Aorta (tissue), 5 donors: ENCODE measurements at regions of chr17 and their contacts with region 1.

Region 1: GRCh38 chr17:6313835-6314234 is 121.1 kb downstream of the AIPL1 start:
- DNase-seq: no peak
- ATAC-seq: no peak
- H3K4me3 ChIP-seq: no peak overlapping the region
- H3K27ac ChIP-seq: no peak overlapping the region
- H3K4me1 ChIP-seq: no peaks in the 10 kb centered on the region
- H3K27me3 ChIP-seq: no peaks in the 10 kb centered on the region

Region 2: GRCh38 chr17:6257336-6257735 is 56.5 kb before region 1 on chr17:
- intact Hi-C with region 1: loop called in 1 of 2 experiments (anchors 10 kb)
- DNase-seq: no peak
- ATAC-seq: no peak
- H3K4me3 ChIP-seq: no peak overlapping the region
- H3K27ac ChIP-seq: no peak overlapping the region
- H3K4me1 ChIP-seq: no peaks in the 10 kb centered on the region
- H3K27me3 ChIP-seq: no peaks in the 10 kb centered on the region

Region 3: GRCh38 chr17:6279659-6280058 is 34.2 kb before region 1 on chr17:
- intact Hi-C with region 1: no loop called
- DNase-seq: no peak
- ATAC-seq: no peak
- H3K4me3 ChIP-seq: no peak overlapping the region
- H3K27ac ChIP-seq: no peak overlapping the region
- H3K4me1 ChIP-seq: no peaks in the 10 kb centered on the region
- H3K27me3 ChIP-seq: no peaks in the 10 kb centered on the region